ENCODE measurements at regions of chr1 and their contacts with region 1.

Region 1: GRCh38 chr1:108125312-108126138 is 74.6 kb downstream of the SLC25A24 start:
- DNase-seq: peak; percentile 42
- ATAC-seq: peak; percentile 91
- H3K4me3 Mint-ChIP-seq: no peak overlapping the region
- H3K27ac Mint-ChIP-seq: peak overlapping the region; percentile 2
- H3K4me1 Mint-ChIP-seq: peaks cover 4% of the 10 kb centered on the region
- H3K27me3 Mint-ChIP-seq: no peaks in the 10 kb centered on the region
- CTCF ChIP-seq: peak; percentile 97

Region 2: DNA sequence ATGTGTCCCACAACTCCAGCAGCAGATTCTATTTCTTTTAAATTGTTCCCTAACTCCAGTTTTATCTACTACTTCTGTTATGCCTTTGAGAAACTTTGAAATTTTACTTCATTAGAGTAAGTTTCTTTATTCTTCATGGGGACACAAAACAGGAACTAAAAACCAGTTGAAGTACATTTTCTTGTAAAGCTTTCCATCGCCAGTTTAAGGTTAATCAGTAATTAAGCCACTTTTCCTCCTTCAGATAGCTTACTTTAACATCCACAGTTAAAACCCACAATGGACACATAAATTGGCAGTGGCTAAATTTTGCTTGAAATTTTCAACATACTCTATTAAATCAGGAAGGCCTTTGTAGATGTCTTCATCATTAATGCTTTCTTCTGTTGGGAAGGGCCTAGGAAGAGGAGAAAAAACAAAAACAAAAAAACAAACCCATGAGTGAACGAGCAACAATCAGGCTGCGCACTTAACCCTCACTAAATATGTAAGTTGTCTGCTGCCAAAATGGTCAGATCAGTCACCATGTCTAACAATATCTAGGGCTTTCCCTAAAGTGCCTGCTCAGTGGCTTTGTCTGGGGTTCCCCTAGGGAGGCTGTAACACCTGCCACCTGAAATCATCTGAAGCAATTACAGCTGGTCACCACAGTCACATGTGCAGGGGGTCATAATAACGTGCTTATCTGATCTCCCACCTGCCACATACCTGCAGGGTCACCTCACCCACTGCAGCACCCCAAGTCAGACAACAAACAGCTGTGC is 348.4 kb before region 1 on chr1:
- CTCF ChIA-PET with region 1: interaction called, 488 read pairs
- POLR2A ChIA-PET with region 1: interaction called, 15 read pairs
- intact Hi-C with region 1: loop called (anchors 1 kb)
- DNase-seq: peak; percentile 29
- ATAC-seq: peak; percentile 92
- H3K4me3 Mint-ChIP-seq: peak overlapping the region; percentile 73
- H3K27ac Mint-ChIP-seq: peak overlapping the region; percentile 91
- H3K4me1 Mint-ChIP-seq: peaks cover 22% of the 10 kb centered on the region
- H3K27me3 Mint-ChIP-seq: no peaks in the 10 kb centered on the region
- CTCF ChIP-seq: no peak

Region 3: GRCh38 chr1:107795994-107796393 is 329.5 kb before region 1 on chr1:
- CTCF ChIA-PET with region 1: interaction called, 15 read pairs
- POLR2A ChIA-PET with region 1: interaction called, 5 read pairs
- intact Hi-C with region 1: no loop called
- DNase-seq: no peak
- ATAC-seq: peak; percentile 68
- H3K4me3 Mint-ChIP-seq: peak overlapping the region; percentile 73
- H3K27ac Mint-ChIP-seq: peak overlapping the region; percentile 90
- H3K4me1 Mint-ChIP-seq: peaks cover 80% of the 10 kb centered on the region
- H3K27me3 Mint-ChIP-seq: no peaks in the 10 kb centered on the region
- CTCF ChIP-seq: no peak

Measured in activated B cell treated with CpG ODN at 0.5 μM for 24 hours (primary cell).